Mammary epithelial cell (primary cell): ENCODE measurements at regions of chr14 and their contacts with region 1.

Region 1: GRCh38 chr14:61598980-61599379 is 96.3 kb upstream of the HIF1A start:
- DNase-seq: no peak
- H3K4me3 ChIP-seq: no peak overlapping the region
- H3K27ac ChIP-seq: no peak overlapping the region
- H3K4me1 ChIP-seq: peaks cover 22% of the 10 kb centered on the region
- H3K27me3 ChIP-seq: no peaks in the 10 kb centered on the region
- CTCF ChIP-seq: no peak

Region 2: GRCh38 chr14:61553725-61554641 is 45.0 kb before region 1 on chr14:
- CTCF ChIA-PET with region 1: no interaction called
- dilution Hi-C with region 1: no loop called
- in situ Hi-C with region 1: no loop called
- intact Hi-C with region 1: no loop called
- DNase-seq: peak; percentile 97
- H3K4me3 ChIP-seq: no peak overlapping the region
- H3K27ac ChIP-seq: peak overlapping the region; percentile 66
- H3K4me1 ChIP-seq: peaks cover 50% of the 10 kb centered on the region
- H3K27me3 ChIP-seq: no peaks in the 10 kb centered on the region
- CTCF ChIP-seq: no peak

Region 3: DNA sequence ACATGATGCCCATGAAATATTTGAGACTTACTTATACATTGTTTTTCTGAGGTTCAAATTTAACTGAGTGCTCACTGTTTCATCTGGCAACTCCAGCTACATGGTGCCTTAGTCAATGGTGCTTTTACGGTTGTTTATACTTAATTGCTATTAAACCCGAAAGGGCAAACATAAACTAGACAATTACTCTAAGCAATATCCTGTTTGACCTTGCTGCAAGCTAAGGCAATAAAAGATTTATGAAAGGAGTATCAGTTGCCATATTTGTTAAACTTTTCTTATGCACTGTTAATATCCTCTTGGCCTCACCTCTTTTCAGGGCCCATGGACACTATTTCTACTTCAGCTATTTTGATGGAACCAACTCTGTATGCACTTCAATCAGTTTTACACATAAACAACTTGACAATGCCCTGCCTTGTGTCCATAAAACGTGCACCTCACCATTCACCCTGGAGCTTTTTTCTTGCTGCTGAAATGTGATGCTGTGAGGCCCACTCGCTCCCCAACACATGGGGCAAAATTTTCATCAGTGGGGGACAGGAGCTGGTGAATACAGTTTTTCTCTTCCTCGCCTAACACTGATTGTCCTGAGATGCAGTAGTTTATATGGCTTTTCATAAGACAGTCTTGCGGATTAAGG is 32.2 kb after region 1 on chr14:
- CTCF ChIA-PET with region 1: no interaction called
- dilution Hi-C with region 1: loop called (anchors 5 kb)
- in situ Hi-C with region 1: no loop called
- intact Hi-C with region 1: no loop called
- DNase-seq: no peak
- H3K4me3 ChIP-seq: no peak overlapping the region
- H3K27ac ChIP-seq: no peak overlapping the region
- H3K4me1 ChIP-seq: no peaks in the 10 kb centered on the region
- H3K27me3 ChIP-seq: no peaks in the 10 kb centered on the region
- CTCF ChIP-seq: no peak